Activated CD4-positive, alpha-beta T cell treated with anti-CD3 and anti-CD28 coated beads, Interleukin-2, amount 10 ng/mL, durations not matched to agents 24 days and 14 days (primary cell): ENCODE measurements at regions of chr1 and their contacts with region 1.

Region 1: DNA sequence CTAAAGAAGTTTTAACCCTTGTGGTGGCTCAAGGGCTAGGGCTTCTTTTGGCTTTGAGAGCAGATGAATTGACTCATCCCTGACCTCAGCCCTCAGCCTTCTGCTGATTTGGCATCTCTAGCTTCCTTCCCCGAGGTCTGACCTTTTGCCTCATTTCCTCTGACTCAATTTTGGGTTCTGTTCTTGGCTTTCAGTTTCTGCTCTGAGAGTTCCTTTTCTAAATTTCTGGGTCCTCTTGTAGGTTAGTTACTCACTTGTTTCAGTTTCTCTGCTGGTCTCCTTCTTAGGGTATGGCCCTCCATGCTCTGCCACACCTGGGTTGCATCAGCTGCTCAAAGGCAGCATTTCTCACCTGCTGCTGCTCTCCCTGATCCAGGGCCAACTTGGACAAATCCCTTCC is 19.4 kb downstream of the PDE4B start:
- DNase-seq: peak; percentile 91
- H3K4me3 Mint-ChIP-seq: peak overlapping the region; percentile 4
- H3K27ac Mint-ChIP-seq: peak overlapping the region; percentile 76
- H3K4me1 Mint-ChIP-seq: peaks cover 21% of the 10 kb centered on the region
- H3K27me3 Mint-ChIP-seq: peaks cover 15% of the 10 kb centered on the region

Region 2: DNA sequence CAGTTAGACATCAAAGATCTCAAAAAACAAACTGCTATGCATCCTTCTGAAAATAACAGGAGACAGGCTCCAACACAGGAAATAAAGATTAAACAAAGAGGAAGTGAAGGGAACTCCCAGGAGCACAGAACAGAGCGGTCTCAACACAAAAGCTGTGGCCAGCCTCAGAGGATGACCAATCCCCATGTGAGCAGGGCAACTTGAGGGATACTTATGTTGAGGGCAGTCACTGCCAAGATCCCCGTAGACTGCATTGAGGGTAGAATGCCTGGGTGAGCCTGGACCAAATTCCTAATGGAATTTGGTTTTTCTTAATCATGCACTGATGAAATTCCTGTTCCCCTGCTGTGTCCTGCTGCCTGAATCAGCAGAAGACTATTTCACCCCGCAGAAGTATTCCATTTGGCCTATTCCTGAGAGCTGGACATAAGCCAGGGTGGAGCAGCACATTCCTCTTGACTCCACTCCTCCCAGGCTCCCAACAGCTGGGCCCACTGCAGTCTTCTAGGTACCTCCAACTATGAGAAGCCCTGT is 894.7 kb before region 1 on chr1:
- intact Hi-C with region 1: no loop called
- DNase-seq: no peak
- H3K4me3 Mint-ChIP-seq: no peak overlapping the region
- H3K27ac Mint-ChIP-seq: no peak overlapping the region
- H3K4me1 Mint-ChIP-seq: peaks cover 53% of the 10 kb centered on the region
- H3K27me3 Mint-ChIP-seq: no peaks in the 10 kb centered on the region

Region 3: GRCh38 chr1:64956733-64957441 is 855.2 kb before region 1 on chr1:
- intact Hi-C with region 1: loop called (anchors 5 kb)
- DNase-seq: peak; percentile 74
- H3K4me3 Mint-ChIP-seq: no peak overlapping the region
- H3K27ac Mint-ChIP-seq: no peak overlapping the region
- H3K4me1 Mint-ChIP-seq: peaks cover 44% of the 10 kb centered on the region
- H3K27me3 Mint-ChIP-seq: no peaks in the 10 kb centered on the region

Region 4: GRCh38 chr1:65393347-65393746 is 418.7 kb before region 1 on chr1:
- intact Hi-C with region 1: loop called (anchors 1 kb)
- DNase-seq: peak; percentile 81
- H3K4me3 Mint-ChIP-seq: peak overlapping the region; percentile 38
- H3K27ac Mint-ChIP-seq: peak overlapping the region; percentile 54
- H3K4me1 Mint-ChIP-seq: peaks cover 72% of the 10 kb centered on the region
- H3K27me3 Mint-ChIP-seq: no peaks in the 10 kb centered on the region

Region 5: GRCh38 chr1:65958561-65959350 is 146.7 kb after region 1 on chr1:
- intact Hi-C with region 1: loop called (anchors 5 kb)
- DNase-seq: peak; percentile 82
- H3K4me3 Mint-ChIP-seq: no peak overlapping the region
- H3K27ac Mint-ChIP-seq: no peak overlapping the region
- H3K4me1 Mint-ChIP-seq: peaks cover 4% of the 10 kb centered on the region
- H3K27me3 Mint-ChIP-seq: peaks cover 3% of the 10 kb centered on the region

Region 6: DNA sequence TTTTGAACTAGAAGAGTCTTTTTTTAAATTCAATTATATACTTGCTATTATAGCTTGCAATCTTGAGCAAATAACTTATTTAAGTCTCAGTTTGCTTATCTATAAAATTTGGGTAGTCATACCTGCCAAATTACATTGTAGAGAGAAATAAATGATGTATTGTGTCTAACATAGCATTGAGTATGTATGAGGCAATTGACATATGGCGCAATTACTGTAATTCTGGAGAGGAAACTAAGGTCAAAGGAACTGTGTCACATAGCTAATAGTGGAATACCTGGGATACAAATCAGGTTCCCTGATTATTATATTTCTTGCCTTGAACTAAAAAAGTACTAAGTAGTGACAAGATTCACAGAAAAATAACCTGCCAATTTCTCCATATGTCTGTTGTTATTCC is 283.1 kb after region 1 on chr1:
- intact Hi-C with region 1: no loop called
- DNase-seq: no peak
- H3K4me3 Mint-ChIP-seq: no peak overlapping the region
- H3K27ac Mint-ChIP-seq: no peak overlapping the region
- H3K4me1 Mint-ChIP-seq: peaks cover 2% of the 10 kb centered on the region
- H3K27me3 Mint-ChIP-seq: peaks cover 7% of the 10 kb centered on the region

Region 7: GRCh38 chr1:66282343-66282852 is 470.3 kb after region 1 on chr1:
- intact Hi-C with region 1: loop called (anchors 1 kb)
- DNase-seq: peak; percentile 92
- H3K4me3 Mint-ChIP-seq: peak overlapping the region; percentile 32
- H3K27ac Mint-ChIP-seq: peak overlapping the region; percentile 74
- H3K4me1 Mint-ChIP-seq: peaks cover 69% of the 10 kb centered on the region
- H3K27me3 Mint-ChIP-seq: no peaks in the 10 kb centered on the region

Region 8: DNA sequence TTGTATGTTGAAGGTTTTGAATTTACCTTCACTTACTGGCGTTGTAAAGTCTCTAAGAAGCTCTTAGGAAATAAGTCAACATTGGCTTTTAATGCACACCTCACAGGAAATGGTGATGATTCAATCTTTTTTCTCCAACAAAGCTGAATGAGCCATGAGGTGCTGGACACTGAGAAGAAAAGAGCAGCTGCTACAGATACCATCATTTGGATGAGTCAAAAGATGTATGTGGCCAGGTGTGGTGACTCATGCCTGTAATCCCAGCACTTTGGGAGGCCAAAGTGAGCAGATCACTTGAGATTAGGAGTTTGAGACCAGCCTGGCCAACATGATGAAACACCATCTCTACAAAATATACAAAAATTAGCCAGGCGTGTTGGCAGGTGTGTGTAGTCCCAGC is 1350.9 kb after region 1 on chr1:
- intact Hi-C with region 1: loop called (anchors 10 kb)
- DNase-seq: peak; percentile 83
- H3K4me3 Mint-ChIP-seq: peak overlapping the region; percentile 39
- H3K27ac Mint-ChIP-seq: peak overlapping the region; percentile 89
- H3K4me1 Mint-ChIP-seq: peaks cover 39% of the 10 kb centered on the region
- H3K27me3 Mint-ChIP-seq: no peaks in the 10 kb centered on the region